Breast epithelium (tissue), 4 donors: ENCODE measurements at regions of chr2 and their contacts with region 1.

Region 1: DNA sequence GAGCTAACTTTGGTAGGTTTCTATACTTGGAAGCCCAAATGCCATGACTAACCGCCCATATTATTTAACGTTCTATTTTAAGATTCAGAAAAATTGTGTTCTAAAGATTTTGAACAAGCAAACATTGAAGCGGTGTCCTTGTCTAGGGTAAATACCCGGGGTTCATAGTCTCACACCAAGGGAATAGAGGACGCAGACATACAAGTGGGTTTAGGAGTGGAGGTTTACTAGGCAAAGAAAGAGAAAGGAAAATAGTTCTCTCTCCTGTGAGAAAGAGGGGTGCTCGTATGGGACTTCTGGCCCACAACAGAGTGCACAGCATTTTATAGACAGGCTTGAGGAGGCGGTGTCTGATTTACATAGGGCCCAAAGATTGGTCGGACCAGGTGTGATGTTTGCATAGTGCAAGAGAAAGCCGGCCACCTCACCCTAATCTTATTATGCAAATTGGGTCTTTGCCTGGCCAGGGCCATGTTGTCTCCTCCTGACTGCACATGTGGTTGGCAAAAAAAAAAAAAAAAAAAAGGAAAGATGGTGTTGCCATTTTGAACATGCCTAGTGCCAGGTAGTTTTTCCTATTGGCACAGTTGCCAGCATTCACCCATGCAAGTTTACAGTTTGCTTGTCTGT is 1062.6 kb downstream of the LRP1B start:
- DNase-seq: no peak
- H3K4me3 ChIP-seq: no peak overlapping the region
- H3K27ac ChIP-seq: no peak overlapping the region
- H3K4me1 ChIP-seq: no peaks in the 10 kb centered on the region
- H3K27me3 ChIP-seq: no peaks in the 10 kb centered on the region
- CTCF ChIP-seq: no peak
- POLR2A ChIP-seq: no peak

Region 2: DNA sequence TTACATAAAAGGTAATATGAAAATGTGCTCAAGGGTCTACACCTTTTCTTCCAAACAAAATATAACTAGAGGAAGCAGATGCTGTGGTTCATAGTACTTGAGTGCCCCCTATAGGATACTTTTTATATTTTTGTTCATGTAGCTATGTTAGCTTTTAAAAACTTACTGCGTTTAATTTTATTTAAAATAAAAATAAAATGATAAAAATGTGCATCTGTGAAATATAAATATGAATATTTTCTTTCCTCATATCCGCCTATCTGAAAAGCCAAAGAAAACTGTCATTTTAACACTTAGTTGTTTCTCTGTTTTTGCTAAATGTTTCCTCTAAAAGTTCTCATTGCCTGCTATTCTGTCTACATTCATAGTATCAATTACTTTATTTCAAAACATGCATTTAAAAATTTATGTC is 1072.3 kb after region 1 on chr2:
- intact Hi-C with region 1: loop called (anchors 5 kb)
- DNase-seq: no peak
- H3K4me3 ChIP-seq: no peak overlapping the region
- H3K27ac ChIP-seq: no peak overlapping the region
- H3K4me1 ChIP-seq: no peaks in the 10 kb centered on the region
- H3K27me3 ChIP-seq: no peaks in the 10 kb centered on the region
- CTCF ChIP-seq: peak in 2 of 3 donors; percentile 40 to 46
- POLR2A ChIP-seq: no peak

Region 3: DNA sequence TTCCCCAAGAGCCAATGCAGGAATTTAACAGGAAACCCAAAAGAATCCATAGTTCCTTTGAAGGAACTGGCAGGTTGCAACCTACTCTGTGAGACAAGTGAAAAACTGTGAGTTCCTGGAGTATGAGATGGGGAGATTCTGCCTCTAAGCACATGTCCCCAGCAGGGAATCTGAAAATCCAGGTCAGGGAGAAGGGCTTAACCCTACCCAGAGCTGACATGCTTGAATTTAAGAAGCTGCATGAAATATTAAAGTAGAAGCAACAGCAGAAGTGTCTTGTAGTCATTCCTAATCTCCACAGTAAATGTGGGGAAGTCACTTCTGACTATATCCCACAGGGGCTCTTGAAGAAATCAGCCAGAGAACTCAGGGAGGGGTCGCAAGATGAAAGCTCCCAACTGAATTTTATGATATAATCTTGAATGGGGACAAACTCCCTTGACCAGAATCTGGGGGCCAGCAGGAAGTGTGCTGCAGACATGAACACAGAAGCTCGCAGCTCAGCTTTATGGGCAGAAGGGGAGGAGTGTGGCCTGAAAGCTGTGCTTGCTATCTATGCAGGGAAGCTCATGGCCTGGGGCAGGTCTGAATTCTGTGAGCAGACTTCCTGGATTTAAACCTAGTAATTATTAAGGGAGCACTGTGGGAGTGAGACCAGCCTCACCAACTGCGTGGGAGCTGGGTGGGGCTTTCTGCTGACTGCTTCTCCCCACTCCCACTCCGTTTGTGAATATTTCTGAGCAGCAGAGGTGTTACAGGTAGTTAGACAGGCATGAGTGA is 1625.2 kb after region 1 on chr2:
- intact Hi-C with region 1: no loop called
- DNase-seq: no peak
- H3K4me3 ChIP-seq: no peak overlapping the region
- H3K27ac ChIP-seq: no peak overlapping the region
- H3K4me1 ChIP-seq: no peaks in the 10 kb centered on the region
- H3K27me3 ChIP-seq: no peaks in the 10 kb centered on the region
- CTCF ChIP-seq: no peak
- POLR2A ChIP-seq: no peak